Activated CD4-positive, alpha-beta T cell treated with anti-CD3 and anti-CD28 coated beads, Interleukin-2, amount 10 ng/mL, durations not matched to agents 24 days and 14 days (primary cell): ENCODE measurements at regions of chr11 and their contacts with region 1.

Region 1: DNA sequence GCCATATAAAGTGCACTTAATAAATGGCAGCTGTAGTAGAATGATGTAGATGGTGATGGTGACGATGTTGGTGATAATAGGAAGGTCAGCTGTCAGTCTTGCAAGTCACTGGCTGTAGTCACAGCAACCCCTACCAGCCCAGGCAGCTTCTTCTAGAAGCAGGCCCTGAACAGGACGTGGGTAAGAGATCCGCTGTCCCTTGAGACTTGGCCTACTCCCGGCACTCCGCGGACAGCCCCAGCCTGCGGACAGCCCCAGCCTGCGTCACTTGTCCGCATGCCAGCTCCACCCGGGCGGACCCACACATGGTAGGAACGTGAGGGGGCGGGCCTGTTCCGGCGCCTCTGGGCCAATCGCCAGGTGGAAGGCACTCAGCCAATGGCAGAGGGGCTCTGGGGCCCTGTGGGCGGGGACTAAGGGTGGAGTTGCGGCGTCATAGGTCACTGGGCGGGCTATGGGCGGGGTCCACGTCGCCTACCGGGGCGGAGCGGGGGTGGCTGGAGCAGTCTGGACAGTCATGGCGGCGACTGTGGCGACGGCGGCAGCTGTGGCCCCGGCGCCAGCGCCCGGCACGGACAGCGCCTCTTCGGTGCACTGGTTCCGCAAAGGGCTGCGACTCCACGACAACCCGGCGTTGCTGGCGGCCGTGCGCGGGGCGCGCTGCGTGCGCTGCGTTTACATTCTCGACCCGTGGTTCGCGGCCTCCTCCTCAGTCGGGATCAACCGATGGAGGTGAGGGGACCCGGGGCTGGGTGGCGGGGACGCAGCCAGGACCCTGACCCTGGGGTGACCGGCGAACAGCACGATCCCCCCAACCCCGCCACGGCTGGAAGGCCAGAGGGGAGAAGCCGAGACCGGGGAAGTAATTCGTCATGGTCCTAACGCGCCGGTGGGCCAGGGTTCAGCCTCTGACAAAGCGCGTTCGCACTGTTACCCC is at the start of gene CRY2:
- DNase-seq: peak; percentile 99
- H3K4me3 Mint-ChIP-seq: peak within 1 kb of the TSS; percentile 85
- H3K27ac Mint-ChIP-seq: peak within 1 kb of the TSS; percentile 90
- H3K4me1 Mint-ChIP-seq: peaks cover 41% of the 10 kb centered on the region
- H3K27me3 Mint-ChIP-seq: peaks cover 7% of the 10 kb centered on the region
- total RNA-seq, gene CRY2: 22.1 and 22.5 TPM in 2 replicates

Region 2: GRCh38 chr11:45804761-45805304 is 42.4 kb before region 1 on chr11 and contains the start of gene SLC35C1:
- intact Hi-C with region 1: loop called (anchors 1 kb)
- DNase-seq: peak; percentile 99
- H3K4me3 Mint-ChIP-seq: peak within 1 kb of the TSS; percentile 98
- H3K27ac Mint-ChIP-seq: peak within 1 kb of the TSS; percentile 96
- H3K4me1 Mint-ChIP-seq: peaks cover 32% of the 10 kb centered on the region
- H3K27me3 Mint-ChIP-seq: no peaks in the 10 kb centered on the region
- total RNA-seq, gene SLC35C1: 15.3 and 17.4 TPM in 2 replicates

Region 3: GRCh38 chr11:45885274-45885920 is 38.2 kb after region 1 on chr11 and contains the start of gene MAPK8IP1:
- intact Hi-C with region 1: loop called (anchors 5 kb)
- DNase-seq: peak; percentile 88
- H3K4me3 Mint-ChIP-seq: peak within 1 kb of the TSS; percentile 79
- H3K27ac Mint-ChIP-seq: no peak within 1 kb of the TSS
- H3K4me1 Mint-ChIP-seq: peaks cover 6% of the 10 kb centered on the region
- H3K27me3 Mint-ChIP-seq: peaks cover 10% of the 10 kb centered on the region
- total RNA-seq, gene MAPK8IP1: 0.49 and 0.83 TPM in 2 replicates

Region 4: DNA sequence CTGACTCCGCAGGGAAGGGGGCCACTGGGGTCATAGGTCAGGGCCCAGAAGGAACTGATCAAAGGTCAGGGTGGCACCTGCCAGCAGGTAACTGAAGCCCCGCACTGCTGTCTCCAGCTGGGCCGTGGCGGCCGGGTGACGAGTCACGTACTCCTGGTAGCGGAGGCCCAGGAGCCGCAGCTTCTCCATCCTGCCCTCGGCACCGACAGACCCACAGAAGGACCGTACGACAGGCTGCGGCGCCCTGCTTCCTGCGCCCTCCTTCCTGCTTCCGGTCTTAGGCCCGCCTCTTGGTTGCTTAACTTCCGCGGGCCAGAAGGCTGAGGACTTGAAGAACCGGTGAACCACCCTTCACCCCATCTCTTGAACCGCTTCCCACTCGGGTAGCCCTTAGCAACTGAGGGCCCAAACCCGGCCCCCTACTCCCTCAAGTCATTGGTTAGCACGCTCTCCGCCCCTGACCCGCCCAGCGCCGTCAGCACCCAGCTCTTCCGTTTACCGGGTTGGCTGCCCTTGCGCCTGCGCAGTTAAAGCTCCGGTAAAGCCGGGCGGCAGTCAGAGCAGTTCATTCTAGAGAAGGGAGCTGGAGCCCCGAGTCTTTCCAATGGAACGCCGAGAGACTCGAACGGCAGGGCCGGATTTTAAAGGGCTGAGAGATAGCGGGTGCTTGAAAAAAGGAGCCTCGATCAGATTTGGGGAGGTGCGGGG is 70.5 kb after region 1 on chr11 and contains the start of gene PEX16:
- intact Hi-C with region 1: loop called (anchors 1 kb)
- DNase-seq: peak; percentile 99
- H3K4me3 Mint-ChIP-seq: peak within 1 kb of the TSS; percentile 99
- H3K27ac Mint-ChIP-seq: peak within 1 kb of the TSS; percentile 97
- H3K4me1 Mint-ChIP-seq: peaks cover 21% of the 10 kb centered on the region
- H3K27me3 Mint-ChIP-seq: peaks cover 10% of the 10 kb centered on the region
- total RNA-seq, gene PEX16: 31.3 and 34.8 TPM in 2 replicates

Region 5: DNA sequence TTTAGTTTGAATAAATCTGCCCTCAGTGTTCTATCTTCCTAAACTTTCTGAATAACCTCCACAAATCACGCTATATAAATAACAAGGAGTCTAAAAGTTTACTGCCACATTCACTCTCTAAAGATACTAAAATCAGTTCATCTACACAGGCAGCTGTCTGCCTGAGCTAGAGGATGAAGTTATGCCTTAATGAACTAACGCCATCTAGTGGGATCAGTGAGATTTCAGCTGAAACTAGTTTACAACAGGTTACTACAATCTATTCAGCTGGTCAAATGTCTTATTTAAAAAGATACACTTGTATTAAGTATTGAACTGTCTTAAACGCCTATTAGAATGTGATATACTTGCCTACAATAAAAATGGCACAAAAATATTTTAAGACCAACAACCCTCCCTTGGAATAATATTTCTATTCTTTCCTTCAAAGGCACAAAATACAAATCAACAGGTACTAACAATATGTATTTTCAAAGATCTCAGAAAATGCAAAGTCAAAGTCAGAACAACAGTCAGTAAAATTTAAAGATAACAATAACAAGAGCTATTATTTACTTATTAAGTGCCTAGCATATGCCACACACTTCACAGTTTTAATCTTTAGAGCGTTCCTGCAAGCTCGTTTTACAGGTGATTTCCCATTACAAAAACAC is 159.3 kb after region 1 on chr11:
- intact Hi-C with region 1: loop called (anchors 1 kb)
- DNase-seq: peak; percentile 83
- H3K4me3 Mint-ChIP-seq: no peak overlapping the region
- H3K27ac Mint-ChIP-seq: no peak overlapping the region
- H3K4me1 Mint-ChIP-seq: no peaks in the 10 kb centered on the region
- H3K27me3 Mint-ChIP-seq: no peaks in the 10 kb centered on the region

Region 6: DNA sequence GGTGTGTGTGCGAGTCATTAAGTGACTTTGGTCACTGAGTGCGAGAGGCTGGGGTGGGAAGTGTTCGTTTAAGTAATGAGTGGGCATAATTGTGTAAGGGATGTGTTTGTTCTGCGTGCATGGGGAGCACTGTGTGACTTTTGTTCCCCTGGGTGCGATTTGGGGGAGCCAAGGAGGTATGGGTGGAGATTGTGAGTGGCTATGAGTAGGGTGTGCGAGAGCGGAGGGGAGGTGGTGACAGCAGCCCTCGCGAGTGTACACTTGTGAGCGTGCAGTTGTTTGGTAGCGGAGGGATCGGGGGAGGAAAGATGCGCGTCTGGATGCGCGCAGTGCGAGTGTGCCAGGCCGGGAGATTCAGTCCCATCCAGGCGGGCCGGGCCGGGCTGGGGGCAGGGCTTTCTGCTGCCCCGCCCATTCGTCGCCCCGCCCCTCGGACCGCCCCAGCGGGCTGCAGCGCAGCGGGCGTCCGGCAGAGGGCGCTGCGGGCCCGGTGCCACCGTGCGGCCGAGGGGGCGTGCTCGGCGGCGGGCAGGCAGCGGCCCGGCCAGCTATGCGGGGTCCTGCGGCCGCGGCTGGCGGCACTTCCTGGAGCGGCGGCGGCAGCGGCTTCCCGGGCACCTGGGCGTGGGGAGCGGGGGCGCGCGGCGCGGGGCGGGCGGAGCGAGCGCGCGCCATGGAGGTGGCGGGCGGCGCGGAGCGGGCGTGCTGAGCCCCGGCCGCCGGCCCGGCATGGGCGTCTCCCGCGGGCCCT is 499.8 kb after region 1 on chr11 and contains the start of gene DGKZ:
- intact Hi-C with region 1: loop called (anchors 10 kb)
- DNase-seq: peak; percentile 98
- H3K4me3 Mint-ChIP-seq: peak within 1 kb of the TSS; percentile 88
- H3K27ac Mint-ChIP-seq: peak within 1 kb of the TSS; percentile 91
- H3K4me1 Mint-ChIP-seq: peaks cover 73% of the 10 kb centered on the region
- H3K27me3 Mint-ChIP-seq: no peaks in the 10 kb centered on the region
- total RNA-seq, gene DGKZ: 87.4 and 94.7 TPM in 2 replicates